Esophagus squamous epithelium (tissue), 5 donors: ENCODE measurements at regions of chr2 and their contacts with region 1.

Region 1: GRCh38 chr2:119407430-119408220 is 24.0 kb upstream of the TMEM37 start:
- DNase-seq: no peak
- H3K4me3 ChIP-seq: no peak overlapping the region
- H3K27ac ChIP-seq: no peak overlapping the region
- H3K4me1 ChIP-seq: peaks cover 0 to 18% (median 0%) of the 10 kb centered on the region in 3 donors
- H3K27me3 ChIP-seq: no peaks in the 10 kb centered on the region
- CTCF ChIP-seq: peak; percentile 57 to 86 (median 82)
- POLR2A ChIP-seq: no peak

Region 2: DNA sequence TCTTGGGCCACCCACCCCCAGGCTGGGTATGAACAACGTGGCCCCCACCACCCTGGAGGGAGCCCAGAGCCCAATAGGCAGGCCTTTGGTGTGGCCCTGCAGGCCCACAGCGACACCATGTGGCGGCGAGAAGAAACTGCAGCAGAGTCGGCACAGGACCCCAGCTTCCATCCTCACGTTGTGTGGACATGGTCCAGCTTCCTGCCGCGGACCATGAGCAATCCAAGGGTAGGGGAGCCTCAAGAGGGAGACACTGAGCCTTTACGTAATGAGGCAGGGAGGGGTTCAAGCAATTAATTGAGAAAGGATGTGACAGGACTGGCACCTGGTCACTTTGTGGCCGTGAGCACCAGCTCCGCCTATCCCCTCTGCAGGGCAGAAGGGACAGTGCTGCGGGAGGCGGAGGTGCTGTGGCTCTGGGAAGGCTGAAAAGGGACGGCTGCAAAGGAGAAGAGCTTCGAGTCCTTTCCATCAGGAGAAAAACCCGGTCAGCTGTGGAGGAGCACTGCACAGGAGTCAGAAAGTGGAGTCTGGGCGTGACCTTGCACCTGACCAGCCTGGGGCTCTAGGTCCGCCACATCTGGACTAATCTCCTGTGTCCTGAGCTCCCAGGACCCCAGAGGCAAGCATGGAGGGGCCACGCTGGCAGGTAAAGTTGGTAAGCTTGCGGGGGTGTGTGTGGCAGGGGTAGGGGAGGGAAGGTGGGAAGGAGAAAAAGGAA is 68.8 kb after region 1 on chr2:
- intact Hi-C with region 1: loop called (anchors 2 kb)
- DNase-seq: no peak
- H3K4me3 ChIP-seq: no peak overlapping the region
- H3K27ac ChIP-seq: no peak overlapping the region
- H3K4me1 ChIP-seq: peaks cover 0 to 5% (median 0%) of the 10 kb centered on the region in 3 donors
- H3K27me3 ChIP-seq: peaks cover 0 to 15% (median 0%) of the 10 kb centered on the region in 4 donors
- CTCF ChIP-seq: peak; percentile 80 to 98 (median 89)
- POLR2A ChIP-seq: no peak

Region 3: GRCh38 chr2:119517433-119517832 is 109.8 kb after region 1 on chr2:
- intact Hi-C with region 1: no loop called
- DNase-seq: no peak
- H3K4me3 ChIP-seq: no peak overlapping the region
- H3K27ac ChIP-seq: no peak overlapping the region
- H3K4me1 ChIP-seq: no peaks in the 10 kb centered on the region
- H3K27me3 ChIP-seq: peaks cover 0 to 43% (median 0%) of the 10 kb centered on the region in 4 donors
- CTCF ChIP-seq: peak; percentile 18 to 61 (median 44)
- POLR2A ChIP-seq: no peak

Region 4: DNA sequence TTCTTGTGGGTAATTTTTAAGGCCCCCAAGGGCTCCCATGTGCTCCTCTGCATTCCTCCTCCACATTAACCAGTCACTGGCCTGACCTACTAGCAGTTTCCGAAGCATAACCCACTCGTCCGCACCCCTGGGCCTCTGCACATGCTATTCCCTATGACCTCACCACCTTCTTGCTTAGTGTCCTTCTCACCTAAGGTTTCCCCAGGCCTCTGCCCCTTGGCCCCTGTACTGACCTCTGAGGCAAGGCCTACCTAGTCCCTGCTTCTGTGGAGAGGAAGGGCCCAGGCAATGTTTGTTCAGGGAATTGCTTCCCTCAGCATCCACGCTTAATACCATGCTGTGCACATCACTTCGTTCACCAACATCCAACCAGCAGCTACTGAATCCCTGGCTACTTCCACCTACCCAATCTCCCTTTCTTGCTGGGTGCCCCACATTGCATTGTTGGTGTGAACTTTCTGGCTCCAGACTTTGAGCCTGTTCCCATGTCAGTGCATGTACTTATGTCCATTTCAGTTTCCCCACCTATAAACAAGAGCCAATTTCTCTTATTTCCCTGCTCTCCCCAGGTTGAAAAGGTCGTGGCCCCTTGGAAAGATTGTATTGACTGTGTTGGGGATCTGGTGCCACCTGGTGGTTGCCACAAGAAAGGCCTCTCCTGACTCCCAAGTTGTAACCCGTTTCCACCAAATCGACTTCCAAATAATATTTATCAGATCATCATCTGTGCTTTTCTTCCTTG is 252.1 kb after region 1 on chr2:
- intact Hi-C with region 1: loop called (anchors 5 kb)
- DNase-seq: no peak
- H3K4me3 ChIP-seq: no peak overlapping the region
- H3K27ac ChIP-seq: no peak overlapping the region
- H3K4me1 ChIP-seq: no peaks in the 10 kb centered on the region
- H3K27me3 ChIP-seq: peaks cover 0 to 19% (median 0%) of the 10 kb centered on the region in 4 donors
- CTCF ChIP-seq: peak; percentile 47 to 80 (median 70)
- POLR2A ChIP-seq: no peak